ENCODE measurements at regions of chr1 and their contacts with region 1.

Region 1: DNA sequence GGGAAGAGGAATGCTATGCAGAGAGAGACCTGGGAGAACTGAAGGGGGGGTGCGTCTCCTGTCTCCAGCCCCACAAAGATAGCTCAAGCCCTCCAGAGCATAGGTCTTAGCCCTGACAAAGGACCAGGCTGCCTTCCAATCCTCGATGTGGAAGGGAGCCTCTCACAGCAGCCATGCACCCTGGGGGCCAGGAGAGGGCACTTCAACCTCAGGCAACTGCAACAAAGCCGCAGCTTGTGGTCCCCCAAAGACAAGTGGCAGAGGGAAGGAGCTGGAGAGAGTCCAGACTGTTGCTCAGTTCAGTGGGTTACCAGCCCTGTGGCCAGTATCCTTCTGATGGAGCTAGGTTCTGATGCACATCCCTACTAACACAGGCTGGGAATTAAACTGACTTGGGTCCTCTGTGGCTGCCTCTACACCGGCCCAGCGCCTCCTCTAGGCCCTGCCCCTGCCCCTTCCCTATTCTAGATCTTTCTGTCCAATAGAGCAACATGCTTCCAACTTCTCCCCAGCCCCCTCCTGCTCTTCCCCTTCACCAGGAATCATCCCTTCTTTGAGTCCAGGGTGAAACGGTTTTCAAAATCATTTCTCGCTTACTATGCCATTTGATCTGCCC is 100.8 kb upstream of the SPATA6 start:
- DNase-seq: peak; percentile 87
- ATAC-seq: peak; percentile 99
- H3K4me3 Mint-ChIP-seq: no peak overlapping the region
- H3K27ac Mint-ChIP-seq: no peak overlapping the region
- H3K4me1 Mint-ChIP-seq: 0 out of 2 replicates have a peak, but pooled peaks cover 3% of the 10 kb centered on the region
- H3K27me3 Mint-ChIP-seq: no peaks in the 10 kb centered on the region; the same call in none of the 2 replicates
- CTCF ChIP-seq: peak; percentile 61

Region 2: GRCh38 chr1:48596046-48596445 is 23.3 kb after region 1 on chr1:
- CTCF ChIA-PET with region 1: interaction called, 24 read pairs
- POLR2A ChIA-PET with region 1: no interaction called
- DNase-seq: no peak
- ATAC-seq: peak; percentile 83
- H3K4me3 Mint-ChIP-seq: no peak overlapping the region
- H3K27ac Mint-ChIP-seq: no peak overlapping the region
- H3K4me1 Mint-ChIP-seq: peaks cover 18% of the 10 kb centered on the region
- H3K27me3 Mint-ChIP-seq: no peaks in the 10 kb centered on the region
- CTCF ChIP-seq: no peak

Region 3: DNA sequence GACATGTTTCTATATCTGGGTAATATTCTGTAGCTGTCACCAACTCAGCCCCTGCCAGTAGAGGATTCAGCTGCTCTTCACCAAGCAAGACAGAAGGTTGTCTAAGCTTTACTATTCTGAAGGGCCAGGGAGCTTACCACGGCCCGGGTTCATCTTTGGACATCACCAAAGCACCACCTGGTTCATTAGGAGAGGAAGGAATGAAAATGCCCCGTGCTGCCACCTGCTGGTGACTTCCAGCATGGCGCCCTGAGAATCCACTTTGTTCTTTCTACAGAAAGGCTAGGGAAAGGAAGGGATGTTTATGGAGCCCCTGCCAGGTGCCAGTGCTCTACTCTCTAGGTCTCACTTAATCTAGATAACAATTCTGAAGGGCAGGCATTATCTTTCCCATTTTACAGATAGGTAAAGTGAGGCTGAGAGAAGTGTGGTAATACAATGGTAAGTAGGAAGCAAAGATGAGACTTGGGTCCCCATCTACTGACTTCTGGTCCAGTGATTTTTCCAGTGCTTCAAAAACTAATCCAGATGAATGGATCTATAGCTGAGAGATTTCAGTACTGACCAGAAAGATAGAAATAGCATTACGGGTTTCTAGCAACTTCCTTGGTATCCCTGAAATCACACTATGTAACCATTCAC is 124.4 kb after region 1 on chr1:
- CTCF ChIA-PET with region 1: interaction called, 82 read pairs
- POLR2A ChIA-PET with region 1: no interaction called
- DNase-seq: peak; percentile 85
- ATAC-seq: peak; percentile 80
- H3K4me3 Mint-ChIP-seq: no peak overlapping the region
- H3K27ac Mint-ChIP-seq: no peak overlapping the region
- H3K4me1 Mint-ChIP-seq: peaks cover 3% of the 10 kb centered on the region
- H3K27me3 Mint-ChIP-seq: no peaks in the 10 kb centered on the region
- CTCF ChIP-seq: peak; percentile 85

Region 4: DNA sequence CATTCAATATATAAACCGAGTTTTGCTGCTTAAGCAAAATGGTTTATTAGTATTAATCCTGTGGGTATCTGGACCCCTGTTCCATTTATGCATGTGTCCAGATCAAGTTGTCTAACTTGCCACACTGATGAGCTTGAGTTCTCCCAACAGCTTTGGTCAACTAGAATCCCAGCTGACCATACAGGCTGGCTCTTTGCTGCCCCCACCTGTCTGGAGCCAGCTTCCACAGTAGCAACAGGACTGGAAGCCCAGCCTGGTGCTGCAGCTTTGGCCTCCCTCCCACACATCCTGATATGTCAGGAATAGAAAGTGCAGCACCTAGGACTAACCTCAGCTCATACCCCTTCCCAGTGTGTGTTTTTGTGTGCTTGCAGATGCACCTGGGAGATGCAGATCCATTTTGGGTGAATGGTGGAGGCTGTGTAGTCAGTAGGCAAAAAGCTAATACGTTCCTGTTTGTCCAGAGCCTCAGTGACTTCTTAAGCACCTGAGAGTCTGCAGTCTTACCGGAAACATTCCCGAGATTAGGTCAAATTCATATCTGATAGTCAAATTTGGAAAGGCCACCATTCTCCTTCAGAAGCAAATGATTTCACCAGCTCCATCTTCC is 244.9 kb after region 1 on chr1:
- CTCF ChIA-PET with region 1: interaction called, 62 read pairs
- POLR2A ChIA-PET with region 1: interaction called, 3 read pairs
- DNase-seq: peak; percentile 75
- ATAC-seq: peak; percentile 100
- H3K4me3 Mint-ChIP-seq: no peak overlapping the region
- H3K27ac Mint-ChIP-seq: no peak overlapping the region
- H3K4me1 Mint-ChIP-seq: no peaks in the 10 kb centered on the region
- H3K27me3 Mint-ChIP-seq: no peaks in the 10 kb centered on the region
- CTCF ChIP-seq: peak; percentile 47

Region 5: DNA sequence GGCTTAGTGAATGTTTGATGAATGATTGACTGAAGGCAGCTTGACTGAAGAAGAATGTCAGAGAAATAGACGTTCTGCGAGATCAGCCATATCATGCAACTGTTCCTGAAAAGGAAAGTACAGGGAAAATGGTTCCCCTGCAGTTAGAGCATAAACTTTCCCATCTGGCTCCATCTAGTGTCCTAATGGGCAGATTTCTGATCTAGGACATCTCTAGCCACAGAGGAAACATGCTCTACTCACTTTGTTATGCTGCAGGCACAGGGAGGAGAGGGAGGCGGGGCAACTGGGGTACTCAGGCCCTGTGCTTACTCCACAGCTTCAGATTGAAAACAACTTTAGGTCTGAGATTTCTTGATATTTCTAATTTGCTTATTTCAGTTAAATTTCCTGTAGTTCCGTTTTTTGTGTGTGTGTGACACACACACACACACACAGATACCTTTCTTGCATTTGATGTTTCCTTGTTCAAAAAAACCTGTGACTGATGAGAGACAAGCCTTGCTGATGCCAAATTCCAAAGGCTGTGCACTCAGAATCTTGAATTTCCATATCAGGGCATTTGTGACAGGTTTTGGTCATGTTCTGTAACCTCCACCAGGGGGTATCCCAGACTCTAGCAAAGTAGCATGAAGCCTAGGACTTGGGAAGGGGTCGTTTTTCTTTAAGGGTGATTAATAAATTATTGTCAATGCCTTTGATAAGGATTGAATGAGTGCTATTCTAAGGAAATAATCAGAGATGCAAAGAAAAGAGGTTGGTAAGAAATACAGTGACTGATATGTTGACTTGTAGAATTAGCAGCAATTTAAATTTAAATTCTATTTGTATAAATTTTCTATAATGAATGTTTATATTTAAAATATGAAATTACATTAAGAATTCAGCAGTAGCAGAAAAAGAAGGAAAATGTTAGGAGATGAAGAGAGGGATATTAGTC is 343.6 kb after region 1 on chr1:
- CTCF ChIA-PET with region 1: interaction called, 11 read pairs
- POLR2A ChIA-PET with region 1: no interaction called
- DNase-seq: peak; percentile 53
- ATAC-seq: peak; percentile 100
- H3K4me3 Mint-ChIP-seq: no peak overlapping the region
- H3K27ac Mint-ChIP-seq: peak overlapping the region; percentile 20; the same call in 1 of the 2 replicates
- H3K4me1 Mint-ChIP-seq: peaks cover 8% of the 10 kb centered on the region
- H3K27me3 Mint-ChIP-seq: no peaks in the 10 kb centered on the region
- CTCF ChIP-seq: no peak